AG04450 (cell line): ENCODE measurements at regions of chr12 and their contacts with region 1.

Region 1: GRCh38 chr12:62210422-62210821 is 49.8 kb upstream of the USP15 start:
- DNase-seq: no peak
- H3K4me3 ChIP-seq: no peak overlapping the region
- H3K27ac ChIP-seq: no peak overlapping the region
- H3K27me3 ChIP-seq: no peaks in the 10 kb centered on the region
- CTCF ChIP-seq: peak; percentile 91

Region 2: GRCh38 chr12:61713121-61713520 is 497.3 kb before region 1 on chr12:
- CTCF ChIA-PET with region 1: no interaction called
- POLR2A ChIA-PET with region 1: no interaction called
- DNase-seq: no peak
- H3K4me3 ChIP-seq: no peak overlapping the region
- H3K27ac ChIP-seq: no peak overlapping the region
- H3K27me3 ChIP-seq: no peaks in the 10 kb centered on the region
- CTCF ChIP-seq: no peak

Region 3: GRCh38 chr12:62166510-62166909 is 43.9 kb before region 1 on chr12:
- CTCF ChIA-PET with region 1: interaction called, 10 read pairs
- POLR2A ChIA-PET with region 1: no interaction called
- DNase-seq: no peak
- H3K4me3 ChIP-seq: no peak overlapping the region
- H3K27ac ChIP-seq: no peak overlapping the region
- H3K27me3 ChIP-seq: no peaks in the 10 kb centered on the region
- CTCF ChIP-seq: no peak

Region 4: DNA sequence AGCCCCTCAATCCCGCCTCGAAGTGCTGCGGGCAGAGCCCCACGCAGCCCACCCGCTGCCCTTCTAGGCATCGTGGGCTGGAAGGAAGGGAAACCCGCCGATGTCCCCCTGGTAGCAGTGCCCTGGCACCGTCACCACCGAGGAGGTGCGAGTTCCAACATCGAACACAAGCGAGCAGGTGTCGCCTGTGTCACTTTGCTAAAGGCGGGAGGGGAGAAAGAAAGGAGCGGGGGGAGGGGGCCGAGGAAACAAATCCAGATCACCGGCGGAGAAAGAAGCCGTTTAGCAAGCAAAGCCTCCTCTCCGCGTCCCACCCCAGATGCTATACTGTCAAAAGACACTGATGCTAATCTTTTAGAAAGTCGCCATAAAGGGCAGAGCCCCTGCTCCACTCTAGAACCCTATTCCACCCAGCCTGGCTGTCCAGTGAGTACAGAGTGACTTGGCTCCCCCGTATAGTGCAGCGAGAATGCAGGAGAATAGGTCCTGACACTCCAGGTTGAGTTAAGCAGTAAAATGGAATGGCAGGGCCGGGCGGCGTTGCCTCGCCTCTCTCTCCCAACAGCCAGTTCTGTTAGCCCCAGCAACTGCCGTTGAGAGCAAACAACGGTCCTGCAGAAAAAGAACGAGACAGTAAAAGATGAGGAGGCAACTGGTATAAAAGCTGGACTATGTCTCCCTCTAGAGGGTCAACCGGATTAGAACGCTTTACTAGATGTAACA is 18.1 kb before region 1 on chr12:
- CTCF ChIA-PET with region 1: interaction called, 29 read pairs
- POLR2A ChIA-PET with region 1: no interaction called
- DNase-seq: peak; percentile 34
- H3K4me3 ChIP-seq: peak overlapping the region; percentile 48
- H3K27ac ChIP-seq: no peak overlapping the region
- H3K27me3 ChIP-seq: peaks cover 28% of the 10 kb centered on the region
- CTCF ChIP-seq: peak; percentile 78

Region 5: GRCh38 chr12:62268956-62269355 is 58.5 kb after region 1 on chr12:
- CTCF ChIA-PET with region 1: interaction called, 12 read pairs
- POLR2A ChIA-PET with region 1: no interaction called
- DNase-seq: no peak
- H3K4me3 ChIP-seq: no peak overlapping the region
- H3K27ac ChIP-seq: no peak overlapping the region
- H3K27me3 ChIP-seq: no peaks in the 10 kb centered on the region
- CTCF ChIP-seq: no peak

Region 6: DNA sequence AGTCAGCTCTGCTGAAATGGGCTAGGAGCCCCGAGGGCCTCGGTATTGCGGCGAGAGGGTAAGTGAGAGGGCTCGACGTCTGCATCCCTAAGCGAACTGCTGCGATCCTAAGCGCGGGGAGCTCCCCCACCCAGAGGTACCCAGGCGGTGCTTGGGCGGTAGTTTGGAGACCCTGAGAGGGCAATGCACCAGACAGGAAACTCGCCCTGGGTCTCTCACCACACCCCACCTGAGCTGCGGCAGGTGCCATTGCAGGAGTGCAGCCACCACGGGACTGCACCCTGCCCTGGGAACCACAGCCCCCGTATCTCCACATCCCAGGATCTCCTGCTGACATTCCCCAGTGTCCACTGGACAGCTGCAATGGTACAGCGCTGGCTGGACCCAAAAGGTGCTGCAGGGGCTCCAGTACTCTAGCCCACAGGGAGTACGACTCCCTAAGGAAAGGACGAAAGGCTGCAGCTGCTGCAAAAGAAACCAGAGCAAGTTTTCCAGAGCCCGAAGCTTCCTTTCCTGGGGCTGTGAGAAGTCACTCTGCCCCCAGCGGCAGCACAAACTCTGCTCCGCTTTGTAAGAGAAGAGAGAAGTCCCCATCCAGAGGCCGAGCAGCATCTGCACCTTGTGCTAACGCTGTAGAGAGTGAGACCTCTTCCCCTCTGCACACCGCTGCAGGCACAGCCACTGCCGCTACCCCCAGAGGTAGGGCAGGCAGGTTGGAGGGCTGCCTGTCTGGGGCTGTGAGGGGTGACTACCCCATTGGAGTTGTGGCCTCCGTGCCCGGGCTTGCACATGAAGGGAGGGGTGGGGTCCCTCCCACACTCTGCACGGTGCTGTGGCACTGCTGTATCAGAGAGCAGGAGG is 225.1 kb after region 1 on chr12:
- CTCF ChIA-PET with region 1: no interaction called
- POLR2A ChIA-PET with region 1: no interaction called
- DNase-seq: peak; percentile 49
- H3K4me3 ChIP-seq: peak overlapping the region; percentile 61
- H3K27ac ChIP-seq: no peak overlapping the region
- H3K27me3 ChIP-seq: peaks cover 26% of the 10 kb centered on the region
- CTCF ChIP-seq: peak; percentile 75